ENCODE measurements at regions of chr2 and their contacts with region 1.

Region 1: GRCh38 chr2:86440631-86441391 is at the start of gene KDM3A:
- DNase-seq: peak; percentile 99
- ATAC-seq: peak; percentile 84
- H3K4me3 ChIP-seq: peak within 1 kb of the TSS; percentile 81
- H3K27ac ChIP-seq: peak within 1 kb of the TSS; percentile 89
- H3K4me1 ChIP-seq: peaks cover 29% of the 10 kb centered on the region
- H3K27me3 ChIP-seq: no peaks in the 10 kb centered on the region
- CTCF ChIP-seq: no peak
- total RNA-seq, gene KDM3A: 32.2 and 59.6 TPM in 2 replicates

Region 2: DNA sequence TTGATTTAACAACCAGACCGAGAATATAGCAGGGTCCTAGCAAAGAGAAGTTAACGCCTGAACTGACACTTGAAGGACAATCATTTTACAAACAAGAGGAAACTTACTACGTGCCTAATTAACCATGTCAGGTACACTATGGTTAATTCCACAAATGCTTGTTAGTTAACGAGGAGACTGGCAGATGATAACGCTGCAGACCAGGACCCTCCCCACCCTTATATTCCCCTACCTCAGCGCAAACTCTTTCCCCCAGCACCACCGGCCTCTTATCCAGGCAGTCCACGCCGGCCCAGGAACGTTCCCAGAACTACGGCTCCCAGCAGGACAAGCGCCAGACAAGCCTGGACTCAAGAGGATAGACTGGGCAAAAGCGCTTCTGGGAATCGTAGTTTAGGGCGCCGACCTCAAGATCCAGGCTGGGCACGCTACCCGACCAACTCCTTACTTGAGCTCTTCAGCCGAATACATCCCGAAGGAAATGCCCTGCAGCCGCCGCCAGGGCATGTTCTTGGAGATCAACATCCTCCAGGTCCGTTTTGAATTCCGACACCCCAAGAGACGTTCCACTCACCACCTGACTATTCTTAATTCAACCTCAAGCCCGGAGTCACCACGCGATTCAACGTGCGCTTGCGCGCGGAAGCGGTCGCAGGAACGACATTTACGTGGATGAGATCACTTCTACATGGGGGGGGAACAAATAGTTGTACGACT is 335.4 kb before region 1 on chr2 and contains the start of gene POLR1A:
- CTCF ChIA-PET with region 1: no interaction called
- POLR2A ChIA-PET with region 1: no interaction called
- intact Hi-C with region 1: loop called (anchors 5 kb)
- DNase-seq: peak; percentile 85
- ATAC-seq: peak; percentile 92
- H3K4me3 ChIP-seq: peak within 1 kb of the TSS; percentile 84
- H3K27ac ChIP-seq: peak within 1 kb of the TSS; percentile 55
- H3K4me1 ChIP-seq: peaks cover 20% of the 10 kb centered on the region
- H3K27me3 ChIP-seq: no peaks in the 10 kb centered on the region
- CTCF ChIP-seq: no peak
- total RNA-seq, gene POLR1A: 25.1 and 36.5 TPM in 2 replicates

Region 3: GRCh38 chr2:86140969-86141392 is 299.8 kb before region 1 on chr2:
- CTCF ChIA-PET with region 1: no interaction called
- POLR2A ChIA-PET with region 1: no interaction called
- intact Hi-C with region 1: no loop called
- DNase-seq: no peak
- ATAC-seq: no peak
- H3K4me3 ChIP-seq: no peak overlapping the region
- H3K27ac ChIP-seq: no peak overlapping the region
- H3K4me1 ChIP-seq: no peaks in the 10 kb centered on the region
- H3K27me3 ChIP-seq: no peaks in the 10 kb centered on the region
- CTCF ChIP-seq: no peak

Region 4: GRCh38 chr2:86221066-86221684 is 219.6 kb before region 1 on chr2:
- CTCF ChIA-PET with region 1: no interaction called
- POLR2A ChIA-PET with region 1: interaction called, 3 read pairs
- intact Hi-C with region 1: loop called (anchors 5 kb)
- DNase-seq: peak; percentile 58
- ATAC-seq: peak; percentile 70
- H3K4me3 ChIP-seq: no peak overlapping the region
- H3K27ac ChIP-seq: no peak overlapping the region
- H3K4me1 ChIP-seq: no peaks in the 10 kb centered on the region
- H3K27me3 ChIP-seq: no peaks in the 10 kb centered on the region
- CTCF ChIP-seq: peak; percentile 82

Region 5: GRCh38 chr2:86426272-86426671 is 14.5 kb before region 1 on chr2:
- CTCF ChIA-PET with region 1: no interaction called
- POLR2A ChIA-PET with region 1: no interaction called
- intact Hi-C with region 1: no loop called
- DNase-seq: no peak
- ATAC-seq: no peak
- H3K4me3 ChIP-seq: no peak overlapping the region
- H3K27ac ChIP-seq: no peak overlapping the region
- H3K4me1 ChIP-seq: no peaks in the 10 kb centered on the region
- H3K27me3 ChIP-seq: peaks cover 39% of the 10 kb centered on the region
- CTCF ChIP-seq: no peak

Region 6: GRCh38 chr2:86480105-86480504 is 39.3 kb after region 1 on chr2:
- CTCF ChIA-PET with region 1: no interaction called
- POLR2A ChIA-PET with region 1: interaction called, 5 read pairs
- intact Hi-C with region 1: loop called (anchors 5 kb)
- DNase-seq: no peak
- ATAC-seq: no peak
- H3K4me3 ChIP-seq: no peak overlapping the region
- H3K27ac ChIP-seq: no peak overlapping the region
- H3K4me1 ChIP-seq: peaks cover 17% of the 10 kb centered on the region
- H3K27me3 ChIP-seq: no peaks in the 10 kb centered on the region
- CTCF ChIP-seq: no peak

Region 7: GRCh38 chr2:86562922-86563649 is 122.3 kb after region 1 on chr2 and contains the start of gene CHMP3:
- CTCF ChIA-PET with region 1: interaction called, 6 read pairs
- POLR2A ChIA-PET with region 1: no interaction called
- intact Hi-C with region 1: loop called (anchors 2 kb)
- DNase-seq: peak; percentile 98
- ATAC-seq: peak; percentile 84
- H3K4me3 ChIP-seq: peak within 1 kb of the TSS; percentile 89
- H3K27ac ChIP-seq: peak within 1 kb of the TSS; percentile 93
- H3K4me1 ChIP-seq: peaks cover 23% of the 10 kb centered on the region
- H3K27me3 ChIP-seq: no peaks in the 10 kb centered on the region
- CTCF ChIP-seq: no peak
- total RNA-seq, gene CHMP3: 54.4 and 96.1 TPM in 2 replicates